PC-3 (cell line): ENCODE measurements at regions of chr7 and their contacts with region 1.

Region 1: DNA sequence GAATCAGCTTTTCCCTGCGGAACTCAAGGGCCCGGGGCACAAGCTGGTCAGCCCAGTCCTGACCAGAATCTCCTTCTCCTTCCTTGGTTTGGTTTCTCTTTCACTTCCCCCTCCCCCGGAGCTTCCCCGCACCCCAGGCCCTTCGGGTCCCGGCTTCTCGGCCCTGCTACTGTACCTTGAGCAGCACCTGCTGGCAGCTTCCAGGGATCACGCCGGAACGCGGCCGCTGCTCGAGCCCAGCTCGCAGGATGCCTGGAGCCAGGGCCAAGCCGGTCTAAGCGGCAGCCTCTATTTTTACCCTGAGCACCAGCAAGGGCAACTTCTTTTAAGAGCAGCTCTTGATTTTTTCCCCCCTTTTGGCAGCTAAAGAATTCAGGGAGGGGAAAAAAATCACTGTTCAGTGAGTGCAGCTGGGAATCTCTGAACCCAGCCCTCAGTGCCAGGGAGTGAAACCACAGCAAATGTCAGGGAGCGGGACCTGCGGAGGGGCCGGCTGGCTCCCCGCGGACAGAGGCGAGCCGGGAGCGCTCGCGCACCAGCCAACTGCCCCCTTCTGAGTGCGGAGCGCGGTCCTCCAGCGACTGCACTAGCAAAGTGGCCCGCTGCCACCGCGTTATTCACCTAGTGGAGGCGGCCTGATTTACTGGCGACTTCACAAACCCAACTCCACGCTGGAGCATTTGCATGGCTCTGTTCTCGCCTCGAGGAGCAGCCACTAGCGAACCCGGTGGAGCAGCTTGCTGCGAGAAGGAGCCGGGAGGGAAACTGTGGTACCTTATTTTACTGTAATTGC is 2.4 kb upstream of the INHBA start:
- DNase-seq: peak; percentile 94
- ATAC-seq: peak; percentile 70
- H3K4me3 ChIP-seq: peak overlapping the region; percentile 68
- H3K27ac ChIP-seq: peak overlapping the region; percentile 94
- H3K4me1 ChIP-seq: peaks cover 61% of the 10 kb centered on the region
- H3K27me3 ChIP-seq: no peaks in the 10 kb centered on the region
- CTCF ChIP-seq: peak; percentile 86

Region 2: DNA sequence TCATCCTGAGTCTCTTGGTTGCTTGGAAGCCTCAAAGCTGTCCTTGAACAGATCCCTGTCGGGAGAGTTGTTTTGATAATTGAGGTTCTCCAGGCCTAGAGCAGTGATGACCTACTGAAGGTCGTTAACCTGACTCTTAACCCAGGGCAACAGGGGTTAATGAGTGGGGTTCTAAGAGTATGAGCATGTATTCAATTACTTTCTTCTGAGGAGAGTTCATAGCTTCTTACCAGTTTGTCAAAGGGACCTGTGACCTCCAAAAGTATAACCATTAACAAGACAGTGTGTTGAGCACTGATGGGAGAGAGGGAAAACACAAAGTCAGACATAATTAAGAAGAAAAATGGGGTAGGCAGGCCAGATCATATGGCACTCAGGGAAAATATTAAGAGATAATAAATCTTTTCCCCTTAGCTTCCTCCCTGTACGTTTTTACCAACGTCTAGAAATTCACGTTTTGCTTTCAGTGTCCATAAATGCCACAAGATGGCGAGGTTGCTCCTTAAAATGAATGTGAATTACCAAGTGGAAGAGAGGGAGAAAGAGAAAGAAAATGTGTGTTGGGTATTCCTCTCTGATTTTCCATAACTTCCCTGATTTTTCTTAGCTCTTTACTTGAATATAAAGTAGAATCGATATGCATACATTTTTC is 1472.9 kb before region 1 on chr7:
- CTCF ChIA-PET with region 1: interaction called, 9 read pairs
- POLR2A ChIA-PET with region 1: no interaction called
- intact Hi-C with region 1: loop called (anchors 10 kb)
- DNase-seq: peak; percentile 77
- ATAC-seq: peak; percentile 84
- H3K4me3 ChIP-seq: no peak overlapping the region
- H3K27ac ChIP-seq: no peak overlapping the region
- H3K4me1 ChIP-seq: no peaks in the 10 kb centered on the region
- H3K27me3 ChIP-seq: no peaks in the 10 kb centered on the region
- CTCF ChIP-seq: peak; percentile 73

Region 3: DNA sequence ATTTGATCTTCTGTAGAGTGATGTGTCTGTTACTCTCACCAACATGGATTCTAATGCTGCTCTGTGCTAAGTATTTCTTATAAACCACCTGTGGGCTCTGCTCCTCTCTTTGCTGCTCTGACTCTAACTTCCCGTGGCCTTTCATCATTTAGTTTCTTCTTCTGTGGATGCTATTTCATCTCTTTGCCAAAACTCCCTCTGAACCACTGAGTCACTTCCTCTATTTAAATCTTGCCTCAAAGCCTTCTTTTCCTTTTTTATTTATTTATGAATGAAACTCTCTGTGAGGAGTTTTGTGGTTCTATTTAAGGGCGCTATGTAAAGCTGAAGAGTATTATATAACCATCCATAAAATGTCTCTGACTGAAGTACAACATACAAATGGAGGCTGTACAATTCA is 1032.0 kb before region 1 on chr7:
- CTCF ChIA-PET with region 1: interaction called, 3 read pairs
- POLR2A ChIA-PET with region 1: no interaction called
- intact Hi-C with region 1: loop called (anchors 10 kb)
- DNase-seq: peak; percentile 79
- ATAC-seq: peak; percentile 91
- H3K4me3 ChIP-seq: no peak overlapping the region
- H3K27ac ChIP-seq: peak overlapping the region; percentile 31
- H3K4me1 ChIP-seq: peaks cover 26% of the 10 kb centered on the region
- H3K27me3 ChIP-seq: no peaks in the 10 kb centered on the region
- CTCF ChIP-seq: no peak

Region 4: GRCh38 chr7:40822861-40823260 is 882.4 kb before region 1 on chr7:
- CTCF ChIA-PET with region 1: no interaction called
- POLR2A ChIA-PET with region 1: interaction called, 3 read pairs
- intact Hi-C with region 1: loop called (anchors 5 kb)
- DNase-seq: peak; percentile 62
- ATAC-seq: peak; percentile 63
- H3K4me3 ChIP-seq: no peak overlapping the region
- H3K27ac ChIP-seq: peak overlapping the region; percentile 63
- H3K4me1 ChIP-seq: peaks cover 43% of the 10 kb centered on the region
- H3K27me3 ChIP-seq: no peaks in the 10 kb centered on the region
- CTCF ChIP-seq: no peak

Region 5: GRCh38 chr7:40859965-40860543 is 845.3 kb before region 1 on chr7:
- CTCF ChIA-PET with region 1: interaction called, 10 read pairs
- POLR2A ChIA-PET with region 1: no interaction called
- intact Hi-C with region 1: no loop called
- DNase-seq: no peak
- ATAC-seq: no peak
- H3K4me3 ChIP-seq: no peak overlapping the region
- H3K27ac ChIP-seq: no peak overlapping the region
- H3K4me1 ChIP-seq: no peaks in the 10 kb centered on the region
- H3K27me3 ChIP-seq: no peaks in the 10 kb centered on the region
- CTCF ChIP-seq: no peak

Region 6: DNA sequence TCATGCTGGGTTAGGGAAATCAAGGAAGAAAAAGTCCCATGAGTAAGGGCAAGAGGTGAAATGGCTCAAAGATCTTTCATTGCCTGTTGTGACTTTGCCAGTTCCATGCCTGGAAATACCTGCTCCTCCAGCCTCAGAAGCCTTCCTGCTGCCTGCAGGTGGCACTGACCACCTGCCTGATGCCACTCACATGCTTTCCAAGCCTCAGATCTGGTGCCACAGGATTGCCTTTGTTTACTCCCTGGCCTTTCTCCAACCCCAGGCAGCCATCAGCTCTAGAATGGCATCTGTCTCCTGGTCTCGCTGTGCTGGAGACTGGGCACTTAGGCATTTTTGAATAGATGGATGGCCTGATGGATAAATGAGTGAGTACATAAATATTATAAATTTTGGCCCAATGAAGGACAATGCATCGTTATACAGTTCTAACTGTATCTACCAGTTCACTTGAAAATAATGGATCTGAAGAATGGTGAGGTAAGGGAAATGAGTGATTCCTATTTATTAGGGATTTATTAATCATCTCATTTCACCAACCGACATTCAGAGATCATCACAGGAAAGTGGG is 659.7 kb before region 1 on chr7:
- CTCF ChIA-PET with region 1: interaction called, 14 read pairs
- POLR2A ChIA-PET with region 1: interaction called, 8 read pairs
- intact Hi-C with region 1: loop called (anchors 1 kb)
- DNase-seq: peak; percentile 87
- ATAC-seq: peak; percentile 76
- H3K4me3 ChIP-seq: no peak overlapping the region
- H3K27ac ChIP-seq: peak overlapping the region; percentile 96
- H3K4me1 ChIP-seq: peaks cover 37% of the 10 kb centered on the region
- H3K27me3 ChIP-seq: no peaks in the 10 kb centered on the region
- CTCF ChIP-seq: peak; percentile 83

Region 7: GRCh38 chr7:41148521-41148951 is 556.8 kb before region 1 on chr7:
- CTCF ChIA-PET with region 1: no interaction called
- POLR2A ChIA-PET with region 1: no interaction called
- intact Hi-C with region 1: loop called (anchors 1 kb)
- DNase-seq: peak; percentile 97
- ATAC-seq: peak; percentile 85
- H3K4me3 ChIP-seq: no peak overlapping the region
- H3K27ac ChIP-seq: peak overlapping the region; percentile 99
- H3K4me1 ChIP-seq: peaks cover 48% of the 10 kb centered on the region
- H3K27me3 ChIP-seq: no peaks in the 10 kb centered on the region
- CTCF ChIP-seq: no peak